ENCODE measurements at regions of chr3 and their contacts with region 1.

Region 1: GRCh38 chr3:34387826-34388564 is 589.6 kb downstream of the PDCD6IP start:
- DNase-seq: no peak
- H3K4me3 ChIP-seq: no peak overlapping the region
- H3K4me3 Mint-ChIP-seq: no peak overlapping the region
- H3K27ac ChIP-seq: no peak overlapping the region
- H3K27ac Mint-ChIP-seq: no peak overlapping the region
- H3K4me1 ChIP-seq: no peaks in the 10 kb centered on the region
- H3K4me1 Mint-ChIP-seq: peaks cover 4% of the 10 kb centered on the region
- H3K27me3 ChIP-seq: no peaks in the 10 kb centered on the region
- H3K27me3 Mint-ChIP-seq: peaks cover 0 to 4% (median 0%) of the 10 kb centered on the region in 3 donors
- CTCF ChIP-seq: no peak

Region 2: GRCh38 chr3:34109846-34110245 is 278.1 kb before region 1 on chr3:
- intact Hi-C with region 1: loop called in 1 of 2 experiments (anchors 10 kb)
- DNase-seq: peak in 2 of 3 donors; percentile 9
- H3K4me3 ChIP-seq: no peak overlapping the region
- H3K4me3 Mint-ChIP-seq: no peak overlapping the region
- H3K27ac ChIP-seq: no peak overlapping the region
- H3K27ac Mint-ChIP-seq: no peak overlapping the region
- H3K4me1 ChIP-seq: peaks cover 11 to 12% of the 10 kb centered on the region in 2 donors
- H3K4me1 Mint-ChIP-seq: peaks cover 14% of the 10 kb centered on the region
- H3K27me3 ChIP-seq: no peaks in the 10 kb centered on the region
- H3K27me3 Mint-ChIP-seq: no peaks in the 10 kb centered on the region
- CTCF ChIP-seq: no peak

Measured in CD14-positive monocyte (primary cell).